GM12878 (cell line): ENCODE measurements at regions of chr13 and their contacts with region 1.

Region 1: GRCh38 chr13:42894765-42895243 is 97.2 kb downstream of the EPSTI1 start:
- DNase-seq: no peak
- ATAC-seq: no peak
- H3K4me3 ChIP-seq: no peak overlapping the region
- H3K27ac ChIP-seq: no peak overlapping the region
- H3K4me1 ChIP-seq: no peaks in the 10 kb centered on the region
- H3K27me3 ChIP-seq: no peaks in the 10 kb centered on the region
- CTCF ChIP-seq: no peak
- EP300 ChIP-seq: no peak
- POLR2A ChIP-seq: no peak
- RAD21 ChIP-seq: no peak

Region 2: GRCh38 chr13:42615691-42616090 is 279.1 kb before region 1 on chr13:
- CTCF ChIA-PET with region 1: no interaction called
- POLR2A ChIA-PET with region 1: no interaction called
- RAD21 ChIA-PET with region 1: no interaction called
- SMC1A ChIA-PET with region 1: no interaction called
- in situ Hi-C with region 1: no loop called
- intact Hi-C with region 1: no loop called
- DNase-seq: no peak
- ATAC-seq: no peak
- H3K4me3 ChIP-seq: no peak overlapping the region
- H3K27ac ChIP-seq: no peak overlapping the region
- H3K4me1 ChIP-seq: no peaks in the 10 kb centered on the region
- H3K27me3 ChIP-seq: no peaks in the 10 kb centered on the region
- CTCF ChIP-seq: no peak
- EP300 ChIP-seq: no peak
- POLR2A ChIP-seq: no peak
- RAD21 ChIP-seq: no peak

Region 3: GRCh38 chr13:42875475-42876269 is 19.1 kb before region 1 on chr13:
- CTCF ChIA-PET with region 1: interaction called, 3 read pairs
- POLR2A ChIA-PET with region 1: interaction called, 5 read pairs
- RAD21 ChIA-PET with region 1: interaction called, 6 read pairs
- SMC1A ChIA-PET with region 1: interaction called, 16 read pairs
- in situ Hi-C with region 1: no loop called
- intact Hi-C with region 1: no loop called
- DNase-seq: no peak
- ATAC-seq: peak; percentile 46; the same call in 2 of the 3 replicates
- H3K4me3 ChIP-seq: no peak overlapping the region
- H3K27ac ChIP-seq: peak overlapping the region; percentile 76
- H3K4me1 ChIP-seq: peaks cover 14% of the 10 kb centered on the region
- H3K27me3 ChIP-seq: no peaks in the 10 kb centered on the region
- CTCF ChIP-seq: peak; percentile 3 to 9 (median 4); a peak in 1 of 6 replicates
- EP300 ChIP-seq: no peak
- POLR2A ChIP-seq: no peak
- RAD21 ChIP-seq: peak; percentile 40

Region 4: DNA sequence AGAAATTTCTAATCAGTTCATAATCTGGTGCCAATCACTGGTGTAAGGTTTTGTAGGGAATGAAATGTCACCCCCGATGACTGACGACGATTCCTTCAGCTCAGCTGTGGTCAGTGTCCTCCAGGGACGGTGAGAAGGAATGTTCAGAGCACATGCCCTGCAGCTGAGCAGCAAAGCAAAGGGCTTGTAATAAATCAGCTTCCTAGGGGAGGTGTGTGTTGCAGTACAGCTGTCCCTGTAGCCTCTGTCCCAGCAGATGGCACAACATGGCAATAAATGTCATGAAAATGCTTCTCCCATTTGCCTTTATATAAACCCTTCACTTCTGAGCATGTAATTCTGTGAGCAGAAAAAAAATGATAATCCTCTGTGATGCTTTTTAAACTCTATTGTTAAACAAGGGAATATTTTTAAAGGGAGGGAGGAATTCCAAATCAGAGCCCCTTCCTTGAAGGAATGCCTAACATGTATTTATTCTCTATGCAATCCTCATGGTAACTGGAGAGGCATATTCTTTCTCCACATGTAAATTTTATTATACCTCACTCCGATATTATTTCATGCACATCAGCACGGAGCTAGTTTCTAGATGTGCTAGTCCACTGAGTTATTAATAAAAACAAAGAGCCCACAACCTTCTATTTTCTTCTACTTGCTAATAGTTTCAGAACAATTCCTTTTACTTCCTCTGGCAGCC is 10.9 kb before region 1 on chr13:
- CTCF ChIA-PET with region 1: interaction called, 3 read pairs
- POLR2A ChIA-PET with region 1: no interaction called
- RAD21 ChIA-PET with region 1: no interaction called
- SMC1A ChIA-PET with region 1: interaction called, 14 read pairs
- in situ Hi-C with region 1: no loop called
- intact Hi-C with region 1: no loop called
- DNase-seq: no peak
- ATAC-seq: peak; percentile 50; the same call in 2 of the 3 replicates
- H3K4me3 ChIP-seq: no peak overlapping the region
- H3K27ac ChIP-seq: no peak overlapping the region
- H3K4me1 ChIP-seq: no peaks in the 10 kb centered on the region
- H3K27me3 ChIP-seq: no peaks in the 10 kb centered on the region
- CTCF ChIP-seq: peak in 2 of 3 experiments; percentile 9 to 48; a peak in 3 of 6 replicates
- EP300 ChIP-seq: no peak
- POLR2A ChIP-seq: no peak
- RAD21 ChIP-seq: 0 out of 2 replicates have a peak, but pooled peaks have one; percentile 25